Endothelial cell of umbilical vein (primary cell): ENCODE measurements at regions of chr21 and their contacts with region 1.

Region 1: DNA sequence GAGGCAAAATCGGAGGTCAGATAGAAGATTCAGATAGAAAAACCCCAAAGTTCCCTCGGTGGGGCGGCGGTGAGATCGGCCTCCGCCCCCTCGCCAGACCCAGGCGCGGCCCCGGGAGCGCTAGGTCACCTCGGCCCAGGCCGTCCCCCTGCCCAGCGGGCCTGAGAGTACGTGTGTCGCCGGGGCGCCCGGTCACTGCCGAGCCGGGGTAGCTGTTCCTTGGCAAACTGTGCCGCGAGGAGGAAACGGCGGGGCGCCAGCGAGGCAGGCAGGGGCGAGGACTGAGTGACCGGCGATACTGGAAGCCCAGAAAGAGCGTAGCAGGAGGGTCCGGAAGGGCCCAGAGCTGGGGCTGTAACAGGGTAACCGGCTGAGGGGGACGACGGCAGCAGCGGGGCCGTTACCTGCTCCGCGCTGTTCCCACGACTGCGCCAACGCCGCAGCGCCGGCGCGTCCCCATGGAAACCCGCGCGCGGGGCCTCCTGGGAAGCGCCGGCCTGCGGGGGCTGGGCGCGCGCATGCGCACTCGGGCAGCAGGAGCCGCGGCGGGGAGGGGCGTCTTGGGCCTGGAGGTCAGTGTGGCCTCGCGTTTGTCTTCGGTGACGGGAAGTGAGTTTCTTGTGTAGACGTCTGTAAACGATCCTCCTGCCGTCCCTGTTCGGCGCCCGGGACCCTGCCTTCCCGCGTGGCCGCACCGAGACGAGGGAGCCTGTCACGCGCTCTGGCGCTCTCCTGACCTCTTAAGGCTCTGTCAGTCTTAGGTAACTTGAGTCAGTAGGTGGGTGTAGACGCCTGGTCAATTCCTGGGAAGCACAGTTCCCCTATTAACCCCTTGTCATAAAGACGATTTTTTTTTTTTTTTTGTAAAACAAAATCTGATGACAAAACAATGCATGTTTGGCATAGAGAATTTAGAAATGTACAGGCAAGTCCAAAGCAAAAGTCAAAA is at the start of gene LCA5L:
- DNase-seq: peak; percentile 90
- H3K4me3 ChIP-seq: peak within 1 kb of the TSS; percentile 58 to 82 (median 61)
- H3K27ac ChIP-seq: peak within 1 kb of the TSS; percentile 43
- H3K4me1 ChIP-seq: peaks cover 7% of the 10 kb centered on the region
- H3K27me3 ChIP-seq: peaks cover 3 to 5% of the 10 kb centered on the region in 2 experiments
- CTCF ChIP-seq: peak; percentile 4 to 40
- POLR2A ChIP-seq: peak; percentile 83
- total RNA-seq, gene LCA5L: 1.0 and 1.2 TPM in 2 replicates

Region 2: DNA sequence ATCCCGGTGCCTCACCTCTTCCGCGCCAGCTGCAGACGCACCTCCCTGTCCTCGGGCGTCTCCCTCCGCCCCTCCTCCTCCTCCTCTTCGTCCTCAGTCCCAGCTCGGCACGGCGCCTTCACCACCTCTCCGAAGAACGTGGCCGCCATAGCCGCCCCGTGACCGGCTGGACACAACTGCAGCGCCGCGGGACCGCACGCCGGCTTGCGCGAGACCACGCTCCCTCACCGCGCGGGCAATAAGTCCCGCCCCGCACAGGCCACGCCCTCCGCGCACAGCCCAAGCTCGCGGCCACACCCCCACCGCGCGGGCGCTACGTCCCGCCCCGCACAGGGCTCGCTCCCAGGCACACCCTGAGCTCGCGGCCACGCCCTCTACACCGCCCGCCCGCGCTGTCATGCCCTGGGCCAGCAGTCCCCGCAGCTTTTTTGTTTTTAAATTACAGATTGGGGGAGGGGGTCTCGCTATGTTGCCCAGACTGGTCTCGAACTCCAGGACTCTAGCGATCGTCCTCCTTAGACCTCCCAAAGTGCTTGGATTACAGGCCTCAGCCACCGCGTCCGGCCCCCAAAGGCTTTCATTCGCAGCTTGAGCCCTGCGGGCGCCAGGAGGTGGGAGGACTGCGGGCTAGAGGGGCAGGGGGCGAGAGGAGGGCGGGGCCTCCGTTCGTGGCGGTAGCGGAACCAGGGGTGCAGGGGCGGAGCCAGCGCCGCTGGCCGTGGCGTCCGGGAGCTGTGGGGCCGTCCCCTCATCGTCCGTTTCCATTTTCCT is 262.2 kb before region 1 on chr21 and contains the start of gene PSMG1:
- CTCF ChIA-PET with region 1: interaction called, 7 read pairs
- POLR2A ChIA-PET with region 1: no interaction called
- dilution Hi-C with region 1: no loop called
- intact Hi-C with region 1: loop called (anchors 1 kb)
- DNase-seq: peak; percentile 96
- H3K4me3 ChIP-seq: peak within 1 kb of the TSS; percentile 75 to 98 (median 92)
- H3K27ac ChIP-seq: peak within 1 kb of the TSS; percentile 70
- H3K4me1 ChIP-seq: peaks cover 18% of the 10 kb centered on the region
- H3K27me3 ChIP-seq: no peaks in the 10 kb centered on the region
- CTCF ChIP-seq: no peak
- POLR2A ChIP-seq: peak; percentile 85
- total RNA-seq, gene PSMG1: 66.3 and 75.9 TPM in 2 replicates

Region 3: GRCh38 chr21:39288987-39289386 is 156.6 kb before region 1 on chr21:
- CTCF ChIA-PET with region 1: no interaction called
- POLR2A ChIA-PET with region 1: no interaction called
- dilution Hi-C with region 1: no loop called
- intact Hi-C with region 1: no loop called
- DNase-seq: no peak
- H3K4me3 ChIP-seq: no peak overlapping the region
- H3K27ac ChIP-seq: no peak overlapping the region
- H3K4me1 ChIP-seq: no peaks in the 10 kb centered on the region
- H3K27me3 ChIP-seq: no peaks in the 10 kb centered on the region
- CTCF ChIP-seq: no peak
- POLR2A ChIP-seq: no peak

Region 4: GRCh38 chr21:39313571-39314142 is 131.9 kb before region 1 on chr21 and contains the start of gene BRWD1:
- CTCF ChIA-PET with region 1: no interaction called
- POLR2A ChIA-PET with region 1: no interaction called
- dilution Hi-C with region 1: no loop called
- intact Hi-C with region 1: loop called (anchors 1 kb)
- DNase-seq: peak; percentile 76
- H3K4me3 ChIP-seq: peak within 1 kb of the TSS; percentile 52 to 57 (median 54)
- H3K27ac ChIP-seq: peak within 1 kb of the TSS; percentile 88
- H3K4me1 ChIP-seq: peaks cover 12% of the 10 kb centered on the region
- H3K27me3 ChIP-seq: peaks cover 4% of the 10 kb centered on the region in 2 experiments
- CTCF ChIP-seq: peak in 1 of 2 donors; percentile 11
- POLR2A ChIP-seq: no peak
- total RNA-seq, gene BRWD1: 28.8 and 33.2 TPM in 2 replicates

Region 5: DNA sequence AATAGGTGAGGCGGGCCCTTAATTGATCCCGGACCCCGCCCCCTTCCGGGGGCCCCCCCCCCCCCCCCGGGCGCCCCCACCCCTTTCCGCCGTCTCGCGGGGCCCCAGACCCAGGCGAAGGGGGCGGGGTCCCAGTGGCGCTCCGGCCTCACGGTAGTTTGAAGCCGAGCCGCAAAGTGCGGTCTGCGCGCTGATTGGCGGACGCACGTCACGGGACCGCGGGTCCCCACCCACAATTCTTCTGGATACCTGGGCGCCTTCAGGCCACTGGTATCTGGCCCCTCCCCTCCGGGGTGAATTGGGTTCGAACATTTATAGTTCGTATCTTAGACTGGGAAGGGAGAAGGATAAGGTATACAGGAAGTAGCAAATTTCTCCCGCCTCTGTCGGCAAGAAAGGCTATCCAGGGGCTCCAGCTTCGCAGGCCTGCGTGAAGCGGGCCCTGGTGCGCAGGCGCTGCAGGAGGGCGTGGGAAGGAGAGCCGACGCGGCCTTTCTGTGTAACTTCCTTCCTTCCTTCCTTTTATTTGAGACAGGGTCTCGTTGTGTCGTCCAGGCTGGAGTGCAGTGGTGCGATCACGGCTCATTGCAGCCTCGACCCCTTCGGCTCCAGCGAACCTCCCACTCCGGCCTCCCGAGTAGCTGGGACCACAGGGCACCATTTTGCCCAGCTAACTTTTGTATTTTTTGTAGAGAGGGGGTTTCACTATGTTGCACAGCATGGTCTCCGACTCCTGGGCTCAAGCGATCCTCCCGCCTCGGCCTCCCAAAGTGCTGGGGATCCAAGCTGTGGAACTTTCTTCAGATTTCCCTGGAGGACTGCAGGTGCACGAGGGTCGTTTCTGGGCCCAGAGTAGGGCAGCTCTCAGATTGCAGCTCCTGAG is 96.1 kb before region 1 on chr21:
- CTCF ChIA-PET with region 1: interaction called, 3 read pairs
- POLR2A ChIA-PET with region 1: no interaction called
- dilution Hi-C with region 1: no loop called
- intact Hi-C with region 1: loop called (anchors 1 kb)
- DNase-seq: peak; percentile 96
- H3K4me3 ChIP-seq: peak overlapping the region; percentile 2 to 59 (median 56)
- H3K27ac ChIP-seq: peak overlapping the region; percentile 88
- H3K4me1 ChIP-seq: peaks cover 34% of the 10 kb centered on the region
- H3K27me3 ChIP-seq: peaks cover 0 to 3% of the 10 kb centered on the region in 2 experiments
- CTCF ChIP-seq: no peak
- POLR2A ChIP-seq: peak; percentile 79

Region 6: DNA sequence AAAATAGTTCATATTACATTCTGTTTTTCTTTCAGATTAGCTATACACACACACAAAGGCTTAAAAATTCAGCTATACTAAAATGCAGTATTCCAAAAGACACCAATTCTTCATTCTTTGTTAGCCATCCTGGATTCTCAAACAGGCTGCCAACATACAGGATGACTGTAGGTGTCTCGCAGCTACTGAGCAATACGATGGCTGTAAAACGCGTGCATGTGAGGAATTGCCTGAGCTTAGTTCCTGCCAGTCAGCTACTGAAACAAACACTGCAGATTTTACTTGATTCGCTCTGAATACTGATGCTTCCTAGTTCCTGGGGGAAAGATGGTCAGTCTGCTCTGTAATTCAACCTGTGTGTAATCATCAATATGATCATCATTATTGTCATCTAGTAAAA is 72.0 kb before region 1 on chr21:
- CTCF ChIA-PET with region 1: interaction called, 14 read pairs
- POLR2A ChIA-PET with region 1: no interaction called
- dilution Hi-C with region 1: no loop called
- intact Hi-C with region 1: no loop called
- DNase-seq: peak; percentile 36
- H3K4me3 ChIP-seq: no peak overlapping the region
- H3K27ac ChIP-seq: no peak overlapping the region
- H3K4me1 ChIP-seq: no peaks in the 10 kb centered on the region
- H3K27me3 ChIP-seq: peaks cover 7 to 10% of the 10 kb centered on the region in 2 experiments
- CTCF ChIP-seq: peak; percentile 19 to 34
- POLR2A ChIP-seq: no peak

Region 7: GRCh38 chr21:39388038-39388810 is 57.4 kb before region 1 on chr21:
- CTCF ChIA-PET with region 1: interaction called, 9 read pairs
- POLR2A ChIA-PET with region 1: no interaction called
- dilution Hi-C with region 1: no loop called
- intact Hi-C with region 1: loop called (anchors 1 kb)
- DNase-seq: peak; percentile 70
- H3K4me3 ChIP-seq: peak overlapping the region; percentile 26 to 41 (median 30)
- H3K27ac ChIP-seq: no peak overlapping the region
- H3K4me1 ChIP-seq: peaks cover 23% of the 10 kb centered on the region
- H3K27me3 ChIP-seq: no peaks in the 10 kb centered on the region
- CTCF ChIP-seq: peak; percentile 94 to 95
- POLR2A ChIP-seq: no peak

Region 8: GRCh38 chr21:39430457-39430856 is 15.1 kb before region 1 on chr21:
- CTCF ChIA-PET with region 1: interaction called, 17 read pairs
- POLR2A ChIA-PET with region 1: no interaction called
- dilution Hi-C with region 1: no loop called
- intact Hi-C with region 1: no loop called
- DNase-seq: no peak
- H3K4me3 ChIP-seq: no peak overlapping the region
- H3K27ac ChIP-seq: no peak overlapping the region
- H3K4me1 ChIP-seq: no peaks in the 10 kb centered on the region
- H3K27me3 ChIP-seq: no peaks in the 10 kb centered on the region
- CTCF ChIP-seq: no peak
- POLR2A ChIP-seq: no peak

Region 9: DNA sequence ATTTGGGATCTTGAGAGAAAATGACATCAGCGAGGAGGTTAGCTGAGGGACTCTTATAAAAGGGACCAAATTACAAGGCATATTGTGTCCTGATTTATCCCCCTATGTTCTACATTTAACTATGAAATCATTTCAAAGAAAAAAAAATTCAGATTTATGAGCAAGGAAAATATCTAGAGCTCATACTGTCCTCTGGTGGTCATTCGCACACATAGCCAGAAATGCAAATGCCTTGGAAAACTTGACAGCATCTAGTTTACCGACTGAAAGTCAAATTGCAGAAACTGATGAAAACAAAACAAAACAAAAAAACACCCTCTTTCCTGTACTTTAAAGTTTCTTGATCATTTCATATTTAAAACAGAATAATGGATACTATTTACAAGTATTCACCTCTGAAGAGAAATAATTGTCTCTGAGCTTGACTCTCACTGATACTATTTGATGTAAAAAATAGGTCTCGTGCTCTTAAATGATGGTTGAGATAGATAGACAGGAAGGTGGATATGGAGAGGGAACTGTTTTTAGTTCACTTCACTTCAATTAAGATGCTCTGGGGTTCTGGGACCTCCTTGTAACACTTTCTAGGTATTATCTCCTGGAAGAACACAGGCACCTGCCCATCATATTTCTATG is 675.5 kb after region 1 on chr21:
- CTCF ChIA-PET with region 1: no interaction called
- POLR2A ChIA-PET with region 1: no interaction called
- dilution Hi-C with region 1: no loop called
- intact Hi-C with region 1: no loop called
- DNase-seq: no peak
- H3K4me3 ChIP-seq: no peak overlapping the region
- H3K27ac ChIP-seq: no peak overlapping the region
- H3K4me1 ChIP-seq: no peaks in the 10 kb centered on the region
- H3K27me3 ChIP-seq: no peaks in the 10 kb centered on the region
- CTCF ChIP-seq: peak; percentile 30 to 36
- POLR2A ChIP-seq: no peak